ENCODE measurements at regions of chr18 and their contacts with region 1.

Region 1: GRCh38 chr18:9474983-9475642 is at the start of gene RALBP1:
- DNase-seq: peak; percentile 94
- ATAC-seq: peak; percentile 96
- H3K4me3 ChIP-seq: peak within 1 kb of the TSS; percentile 97
- H3K27ac ChIP-seq: peak within 1 kb of the TSS; percentile 83
- H3K4me1 ChIP-seq: peaks cover 11% of the 10 kb centered on the region
- H3K27me3 ChIP-seq: no peaks in the 10 kb centered on the region; a peak in 1 of 4 replicates
- CTCF ChIP-seq: peak in 1 of 3 experiments; percentile 39; a peak in 2 of 6 replicates
- EP300 ChIP-seq: no peak
- POLR2A ChIP-seq: peak; percentile 82
- RAD21 ChIP-seq: peak; percentile 47
- polyA plus RNA-seq, gene RALBP1: 11.2 to 17.9 TPM

Region 2: GRCh38 chr18:9240270-9240669 is 234.8 kb before region 1 on chr18:
- CTCF ChIA-PET with region 1: no interaction called
- POLR2A ChIA-PET with region 1: no interaction called
- RAD21 ChIA-PET with region 1: no interaction called
- SMC1A ChIA-PET with region 1: no interaction called
- in situ Hi-C with region 1: no loop called
- intact Hi-C with region 1: loop called (anchors 10 kb)
- DNase-seq: no peak
- ATAC-seq: peak; percentile 66
- H3K4me3 ChIP-seq: no peak overlapping the region
- H3K27ac ChIP-seq: no peak overlapping the region; the same call in 1 of the 2 replicates
- H3K4me1 ChIP-seq: no peaks in the 10 kb centered on the region
- H3K27me3 ChIP-seq: no peaks in the 10 kb centered on the region
- CTCF ChIP-seq: no peak
- EP300 ChIP-seq: 0 out of 4 replicates have a peak, but pooled peaks of 1 of the 2 experiments have one; percentile 31
- POLR2A ChIP-seq: no peak
- RAD21 ChIP-seq: no peak

Region 3: GRCh38 chr18:9334329-9334972 is 140.7 kb before region 1 on chr18 and contains the start of gene TWSG1:
- CTCF ChIA-PET with region 1: interaction called, 3 read pairs
- POLR2A ChIA-PET with region 1: no interaction called
- RAD21 ChIA-PET with region 1: interaction called, 5 read pairs
- SMC1A ChIA-PET with region 1: interaction called, 3 read pairs
- in situ Hi-C with region 1: no loop called
- intact Hi-C with region 1: loop called (anchors 2 kb)
- DNase-seq: peak; percentile 62
- ATAC-seq: peak; percentile 95
- H3K4me3 ChIP-seq: peak within 1 kb of the TSS; percentile 89
- H3K27ac ChIP-seq: peak within 1 kb of the TSS; percentile 36
- H3K4me1 ChIP-seq: peaks cover 5% of the 10 kb centered on the region; the same call in 1 of the 2 replicates
- H3K27me3 ChIP-seq: no peaks in the 10 kb centered on the region
- CTCF ChIP-seq: peak in 2 of 3 experiments; percentile 49 to 64; a peak in 3 of 6 replicates
- EP300 ChIP-seq: no peak
- POLR2A ChIP-seq: peak; percentile 78
- RAD21 ChIP-seq: peak; percentile 46
- polyA plus RNA-seq, gene TWSG1: 11.1 to 11.4 TPM

Region 4: DNA sequence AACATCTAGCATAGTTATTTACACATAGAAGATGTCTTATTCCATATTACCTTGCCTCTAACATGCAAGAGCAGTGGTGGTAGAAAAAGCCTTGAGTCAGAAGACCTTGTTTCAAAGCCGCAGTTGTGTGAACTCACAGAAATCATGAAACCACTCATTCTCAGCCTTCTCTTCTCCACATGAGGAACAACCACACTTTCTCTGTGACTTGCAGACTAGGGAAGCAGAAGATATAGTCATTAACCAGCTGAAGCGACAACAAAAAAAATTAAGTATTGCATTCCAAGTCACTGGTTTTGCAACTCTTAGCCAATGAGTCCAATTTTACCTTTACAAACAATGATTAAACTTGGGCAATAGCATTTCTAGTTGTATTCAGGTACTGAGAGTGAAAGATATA is 121.5 kb before region 1 on chr18:
- CTCF ChIA-PET with region 1: no interaction called
- POLR2A ChIA-PET with region 1: interaction called, 3 read pairs
- RAD21 ChIA-PET with region 1: no interaction called
- SMC1A ChIA-PET with region 1: interaction called, 3 read pairs
- in situ Hi-C with region 1: no loop called
- intact Hi-C with region 1: loop called (anchors 5 kb)
- DNase-seq: peak; percentile 88
- ATAC-seq: peak; percentile 92
- H3K4me3 ChIP-seq: no peak overlapping the region
- H3K27ac ChIP-seq: peak overlapping the region; percentile 75
- H3K4me1 ChIP-seq: peaks cover 26% of the 10 kb centered on the region
- H3K27me3 ChIP-seq: no peaks in the 10 kb centered on the region
- CTCF ChIP-seq: no peak
- EP300 ChIP-seq: peak in 1 of 2 experiments; percentile 43; a peak in 1 of 4 replicates
- POLR2A ChIP-seq: no peak
- RAD21 ChIP-seq: no peak

Region 5: DNA sequence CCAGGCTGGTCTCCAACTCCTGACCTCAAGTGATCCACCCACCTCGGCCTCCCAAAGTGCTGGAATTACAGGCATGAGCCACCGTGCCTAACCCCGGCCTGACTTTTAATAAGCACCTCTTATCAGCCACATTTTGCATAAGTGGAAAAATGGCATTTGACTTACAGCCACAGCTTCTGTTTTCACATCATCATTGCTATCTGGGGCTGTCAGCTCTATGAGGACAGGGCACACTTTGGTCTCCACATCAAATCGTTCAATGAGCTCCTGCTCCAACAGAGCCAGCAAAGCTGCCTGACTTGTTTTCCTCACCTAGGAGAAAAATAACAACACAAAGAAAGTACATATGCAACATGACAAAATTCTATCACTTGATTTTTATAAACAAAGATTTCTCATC is 112.8 kb after region 1 on chr18:
- CTCF ChIA-PET with region 1: no interaction called
- POLR2A ChIA-PET with region 1: no interaction called
- RAD21 ChIA-PET with region 1: no interaction called
- SMC1A ChIA-PET with region 1: no interaction called
- in situ Hi-C with region 1: no loop called
- intact Hi-C with region 1: no loop called
- DNase-seq: no peak
- ATAC-seq: no peak
- H3K4me3 ChIP-seq: no peak overlapping the region
- H3K27ac ChIP-seq: no peak overlapping the region
- H3K4me1 ChIP-seq: no peaks in the 10 kb centered on the region
- H3K27me3 ChIP-seq: no peaks in the 10 kb centered on the region
- CTCF ChIP-seq: no peak
- EP300 ChIP-seq: no peak
- POLR2A ChIP-seq: no peak
- RAD21 ChIP-seq: no peak